Left lung (tissue), 14 donors: ENCODE measurements at regions of chr4 and their contacts with region 1.

Region 1: GRCh38 chr4:22410645-22411247 is 105.1 kb downstream of the ADGRA3 start:
- DNase-seq: peak in 1 of 4 donors; percentile 11
- ATAC-seq: no peak
- H3K4me3 ChIP-seq: no peak overlapping the region
- H3K27ac ChIP-seq: no peak overlapping the region
- H3K4me1 ChIP-seq: no peaks in the 10 kb centered on the region
- H3K27me3 ChIP-seq: no peaks in the 10 kb centered on the region
- CTCF ChIP-seq: peak; percentile 46

Region 2: GRCh38 chr4:22607382-22607781 is 196.6 kb after region 1 on chr4:
- intact Hi-C with region 1: loop called in 1 of 2 experiments (anchors 10 kb)
- DNase-seq: peak; percentile 11 to 50 (median 42)
- ATAC-seq: peak; percentile 97
- H3K4me3 ChIP-seq: no peak overlapping the region
- H3K27ac ChIP-seq: no peak overlapping the region
- H3K4me1 ChIP-seq: no peaks in the 10 kb centered on the region
- H3K27me3 ChIP-seq: no peaks in the 10 kb centered on the region
- CTCF ChIP-seq: peak; percentile 33 to 34

Region 3: GRCh38 chr4:22688236-22688635 is 277.5 kb after region 1 on chr4:
- intact Hi-C with region 1: loop called in 1 of 2 experiments (anchors 10 kb)
- DNase-seq: no peak
- ATAC-seq: no peak
- H3K4me3 ChIP-seq: no peak overlapping the region
- H3K27ac ChIP-seq: no peak overlapping the region
- H3K4me1 ChIP-seq: no peaks in the 10 kb centered on the region
- H3K27me3 ChIP-seq: no peaks in the 10 kb centered on the region
- CTCF ChIP-seq: no peak